Mammary epithelial cell (primary cell): ENCODE measurements at regions of chr18 and their contacts with region 1.

Region 1: DNA sequence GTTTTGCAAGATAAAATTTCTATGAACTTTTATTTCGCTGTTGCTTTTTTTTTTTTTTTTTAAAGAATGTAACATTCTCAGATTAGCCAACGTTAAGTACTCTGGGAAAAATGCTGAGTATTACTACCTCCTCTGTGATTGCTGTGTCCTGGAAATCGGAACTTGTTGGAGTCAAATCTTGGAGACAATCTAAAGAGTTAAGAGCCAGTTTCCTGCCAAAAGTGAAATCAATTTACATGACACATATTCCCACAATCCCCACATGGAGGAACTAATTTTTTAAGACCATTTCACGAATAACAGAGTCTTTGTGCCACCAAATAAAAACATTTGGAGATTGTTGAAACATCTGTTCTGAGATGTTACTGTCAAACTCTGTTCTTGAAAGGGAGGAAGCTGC is 127.8 kb downstream of the MEP1B start:
- DNase-seq: no peak
- H3K4me3 ChIP-seq: no peak overlapping the region
- H3K27ac ChIP-seq: no peak overlapping the region
- H3K4me1 ChIP-seq: peaks cover 5% of the 10 kb centered on the region
- H3K27me3 ChIP-seq: no peaks in the 10 kb centered on the region
- CTCF ChIP-seq: no peak

Region 2: GRCh38 chr18:32383050-32383819 is 65.6 kb after region 1 on chr18:
- CTCF ChIA-PET with region 1: no interaction called
- dilution Hi-C with region 1: no loop called
- in situ Hi-C with region 1: no loop called
- intact Hi-C with region 1: loop called (anchors 2 kb)
- DNase-seq: peak; percentile 99
- H3K4me3 ChIP-seq: peak overlapping the region in 1 of 3 experiments; percentile 25
- H3K27ac ChIP-seq: peak overlapping the region; percentile 91
- H3K4me1 ChIP-seq: peaks cover 35% of the 10 kb centered on the region
- H3K27me3 ChIP-seq: no peaks in the 10 kb centered on the region
- CTCF ChIP-seq: no peak

Region 3: DNA sequence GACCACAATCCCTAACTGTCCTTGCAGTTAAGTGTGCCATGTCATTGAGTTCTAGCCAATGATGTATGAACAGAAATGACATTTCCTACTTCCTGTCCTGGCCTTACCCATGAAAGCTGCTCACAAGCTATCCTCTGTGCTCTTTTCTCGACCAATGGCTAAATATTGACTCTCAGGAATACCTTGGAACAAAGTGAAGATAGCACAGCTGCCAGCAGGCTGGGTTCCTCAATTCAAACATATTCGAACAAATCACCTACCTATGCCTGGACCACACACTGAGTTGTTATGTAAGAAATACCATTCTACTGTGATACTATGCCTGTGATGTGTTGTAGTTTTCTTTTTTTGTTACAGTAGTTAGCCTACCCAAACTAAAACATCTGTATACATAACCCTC is 87.9 kb after region 1 on chr18:
- CTCF ChIA-PET with region 1: no interaction called
- dilution Hi-C with region 1: no loop called
- in situ Hi-C with region 1: no loop called
- intact Hi-C with region 1: no loop called
- DNase-seq: no peak
- H3K4me3 ChIP-seq: no peak overlapping the region
- H3K27ac ChIP-seq: no peak overlapping the region
- H3K4me1 ChIP-seq: no peaks in the 10 kb centered on the region
- H3K27me3 ChIP-seq: no peaks in the 10 kb centered on the region
- CTCF ChIP-seq: no peak